ENCODE measurements at regions of chr17 and their contacts with region 1.

Region 1: GRCh38 chr17:29148790-29149430 is 31.3 kb downstream of the MYO18A start:
- DNase-seq: peak; percentile 91 to 98
- ATAC-seq: peak; percentile 96

Region 2: DNA sequence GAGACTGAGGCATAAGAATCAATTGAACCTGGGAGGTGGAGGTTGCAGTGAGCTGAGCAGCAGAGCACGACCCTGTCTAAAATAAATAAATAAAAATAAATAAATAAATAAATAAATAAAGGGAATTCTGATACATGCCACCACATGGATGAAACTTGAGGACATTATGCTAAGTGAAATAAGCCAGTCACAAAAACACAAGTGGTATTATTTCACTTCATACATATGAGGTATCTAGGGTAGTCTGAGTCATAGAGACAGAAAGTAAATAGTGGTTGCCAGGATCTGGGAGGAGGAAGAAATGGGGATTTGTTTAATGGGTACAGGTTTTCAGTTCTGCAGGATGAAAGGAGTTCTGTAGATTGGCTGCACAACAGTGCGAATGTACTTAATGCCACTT is 89.6 kb before region 1 on chr17:
- intact Hi-C with region 1: no loop called
- DNase-seq: no peak
- ATAC-seq: no peak

Region 3: GRCh38 chr17:29219378-29220047 is 70.6 kb after region 1 on chr17:
- intact Hi-C with region 1: loop called in 1 of 2 experiments (anchors 2 kb)
- DNase-seq: peak; percentile 59 to 80
- ATAC-seq: peak; percentile 80

Region 4: GRCh38 chr17:29293890-29294579 is 145.1 kb after region 1 on chr17 and contains the start of gene NUFIP2:
- intact Hi-C with region 1: loop called in 1 of 2 experiments (anchors 5 kb)
- DNase-seq: peak; percentile 99
- ATAC-seq: peak; percentile 87
- total RNA-seq, gene NUFIP2: 42.4 to 47.2 TPM

Region 5: GRCh38 chr17:29682054-29682453 is 533.1 kb after region 1 on chr17:
- intact Hi-C with region 1: no loop called
- DNase-seq: no peak
- ATAC-seq: peak; percentile 26

Measured in left colon (tissue), 2 donors.